Upper lobe of right lung (tissue), 1 donor: ENCODE measurements at regions of chr5 and their contacts with region 1.

Region 1: GRCh38 chr5:174793684-174794328 is 69.4 kb downstream of the MSX2 start:
- DNase-seq: peak; percentile 76
- ATAC-seq: peak; percentile 88
- H3K4me3 ChIP-seq: no peak overlapping the region
- H3K27ac ChIP-seq: no peak overlapping the region
- H3K4me1 ChIP-seq: no peaks in the 10 kb centered on the region
- H3K27me3 ChIP-seq: peaks cover 16% of the 10 kb centered on the region
- CTCF ChIP-seq: peak; percentile 77

Region 2: DNA sequence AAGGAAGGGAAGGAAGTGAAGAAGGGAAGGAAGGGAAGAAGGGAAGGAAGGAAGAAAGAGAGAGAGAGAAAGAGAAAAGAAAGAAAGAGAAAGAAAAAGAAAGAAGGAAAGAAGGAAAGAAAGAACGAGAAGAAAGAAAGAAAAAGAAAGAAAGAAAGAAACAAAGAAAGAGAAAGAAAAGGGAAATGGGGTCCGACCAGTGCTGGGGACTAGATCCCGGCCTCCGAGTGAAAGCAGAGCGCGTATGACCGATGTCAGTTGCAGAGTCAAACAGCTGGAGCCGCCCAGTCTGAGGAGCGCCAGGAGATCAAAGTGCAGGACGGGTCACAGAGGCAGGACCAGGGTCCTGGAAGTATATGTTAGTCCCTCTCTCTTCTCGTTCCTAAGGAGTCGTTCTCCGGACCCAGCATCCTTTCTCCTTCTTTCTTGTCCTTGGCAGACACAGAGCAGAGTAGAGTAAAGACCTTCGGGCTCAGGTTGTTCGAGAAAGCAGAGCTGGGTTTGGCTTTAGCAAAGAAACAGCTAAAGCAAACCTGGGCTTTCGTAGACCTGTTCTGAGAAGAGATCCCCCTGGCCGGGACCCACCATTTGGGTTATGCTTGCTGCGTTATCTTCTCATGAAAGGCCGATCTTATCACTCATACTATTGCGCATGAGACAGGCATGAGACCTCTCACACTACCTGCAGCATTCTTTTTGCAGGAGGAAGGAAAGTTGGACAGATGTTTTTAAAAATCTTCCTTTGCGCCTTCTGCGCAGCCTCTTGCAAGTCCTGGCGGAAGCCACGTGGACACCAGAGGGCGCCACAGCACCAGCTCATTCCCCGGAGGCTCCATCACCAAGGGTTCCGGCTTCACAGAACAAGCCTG is 374.6 kb before region 1 on chr5:
- intact Hi-C with region 1: loop called (anchors 10 kb)
- DNase-seq: peak; percentile 94
- ATAC-seq: peak; percentile 96
- H3K4me3 ChIP-seq: no peak overlapping the region
- H3K27ac ChIP-seq: no peak overlapping the region
- H3K4me1 ChIP-seq: peaks cover 6% of the 10 kb centered on the region
- H3K27me3 ChIP-seq: no peaks in the 10 kb centered on the region
- CTCF ChIP-seq: peak; percentile 90

Region 3: DNA sequence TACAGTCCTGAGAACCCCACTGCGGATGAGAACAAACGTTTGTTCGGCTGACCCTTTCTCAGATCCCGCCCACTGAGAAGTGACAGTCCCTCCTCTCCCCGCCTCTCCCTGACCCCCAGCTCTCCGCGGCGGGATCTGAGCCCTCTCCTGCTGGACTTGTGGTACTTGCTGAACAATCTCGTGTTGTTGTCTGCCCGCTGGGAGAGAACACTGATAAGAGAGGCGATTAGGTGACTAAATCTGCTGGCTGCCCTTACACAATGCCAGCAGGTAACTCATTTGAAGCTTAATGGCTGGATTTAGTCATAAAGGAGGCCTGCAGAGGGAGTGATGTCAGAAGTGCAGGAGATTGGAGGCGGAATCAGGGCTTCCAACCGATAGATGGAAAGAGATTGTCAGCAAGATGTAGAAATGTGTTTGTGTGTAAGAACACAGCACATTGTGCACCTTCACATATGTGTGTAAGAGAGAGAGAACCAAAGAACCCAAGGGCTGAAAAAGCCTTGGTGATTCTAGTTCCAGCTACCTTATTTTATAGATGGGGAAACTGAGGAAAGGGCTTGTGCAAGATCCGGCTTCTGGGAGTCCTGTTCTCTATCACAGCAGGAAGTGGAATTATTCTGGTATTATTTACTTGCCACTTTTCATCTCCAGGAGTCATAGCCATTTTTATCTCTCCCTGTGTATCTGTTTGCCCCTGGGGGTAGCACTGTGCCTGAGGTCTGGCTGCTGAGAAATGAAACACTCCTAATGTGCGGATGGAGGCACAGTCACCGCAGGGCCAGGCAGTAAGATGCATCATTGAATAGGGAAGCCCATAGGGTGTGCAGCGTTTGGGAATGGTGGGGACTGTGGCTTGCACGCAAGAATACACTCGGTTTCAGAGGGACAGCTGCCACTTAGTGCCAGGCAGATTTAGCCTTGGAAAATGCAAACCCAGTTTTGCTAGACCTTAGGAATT is 273.1 kb before region 1 on chr5:
- intact Hi-C with region 1: no loop called
- DNase-seq: no peak
- ATAC-seq: no peak
- H3K4me3 ChIP-seq: no peak overlapping the region
- H3K27ac ChIP-seq: no peak overlapping the region
- H3K4me1 ChIP-seq: no peaks in the 10 kb centered on the region
- H3K27me3 ChIP-seq: peaks cover 34% of the 10 kb centered on the region
- CTCF ChIP-seq: no peak

Region 4: GRCh38 chr5:174998131-174998730 is 204.4 kb after region 1 on chr5:
- intact Hi-C with region 1: no loop called
- DNase-seq: no peak
- ATAC-seq: no peak
- H3K4me3 ChIP-seq: no peak overlapping the region
- H3K27ac ChIP-seq: no peak overlapping the region
- H3K4me1 ChIP-seq: no peaks in the 10 kb centered on the region
- H3K27me3 ChIP-seq: no peaks in the 10 kb centered on the region
- CTCF ChIP-seq: no peak